Activated CD4-positive, alpha-beta T cell treated with anti-CD3 and anti-CD28 coated beads, Interleukin-2, amount 10 ng/mL, durations not matched to agents 24 days and 14 days (primary cell): ENCODE measurements at regions of chr7 and their contacts with region 1.

Region 1: GRCh38 chr7:99928994-99929729 is at the start of gene GJC3:
- DNase-seq: peak; percentile 85
- H3K4me3 Mint-ChIP-seq: peak within 1 kb of the TSS; percentile 76
- H3K27ac Mint-ChIP-seq: peak within 1 kb of the TSS; percentile 16
- H3K4me1 Mint-ChIP-seq: peaks cover 18% of the 10 kb centered on the region
- H3K27me3 Mint-ChIP-seq: peaks cover 34% of the 10 kb centered on the region
- total RNA-seq, gene GJC3: 0.36 TPM in 1 of 2 replicates, not detected in the other

Region 2: GRCh38 chr7:99693427-99694200 is 235.5 kb before region 1 on chr7:
- intact Hi-C with region 1: no loop called
- DNase-seq: no peak
- H3K4me3 Mint-ChIP-seq: no peak overlapping the region
- H3K27ac Mint-ChIP-seq: no peak overlapping the region
- H3K4me1 Mint-ChIP-seq: no peaks in the 10 kb centered on the region
- H3K27me3 Mint-ChIP-seq: peaks cover 4% of the 10 kb centered on the region

Region 3: DNA sequence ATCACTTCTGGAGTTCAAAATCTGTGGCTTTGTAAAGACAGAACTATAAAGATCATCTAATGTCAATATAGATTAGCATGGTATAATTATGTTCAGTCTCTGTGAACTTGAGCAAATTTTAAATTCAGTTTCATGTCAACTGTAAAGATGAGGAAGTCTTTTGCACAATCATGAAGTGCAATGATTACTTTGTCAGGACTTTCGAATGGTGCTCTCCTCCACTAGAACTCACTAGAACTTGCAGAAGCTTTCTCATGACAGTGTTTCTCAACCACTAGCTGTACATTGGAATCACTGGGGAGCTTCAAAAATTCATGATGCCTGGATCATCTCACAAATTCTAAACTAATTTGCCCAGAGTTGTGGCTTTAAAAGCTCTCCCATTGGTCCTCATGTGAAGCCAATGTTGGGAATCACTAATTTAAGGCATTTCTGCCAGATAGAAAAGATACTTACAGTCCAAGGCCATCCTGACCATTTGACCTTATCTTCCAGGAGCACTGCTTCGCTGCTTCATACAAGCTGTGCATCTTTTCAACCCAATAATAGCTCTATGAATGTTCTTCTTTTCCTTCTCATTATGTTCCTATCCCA is 65.2 kb before region 1 on chr7:
- intact Hi-C with region 1: no loop called
- DNase-seq: no peak
- H3K4me3 Mint-ChIP-seq: no peak overlapping the region
- H3K27ac Mint-ChIP-seq: no peak overlapping the region
- H3K4me1 Mint-ChIP-seq: no peaks in the 10 kb centered on the region
- H3K27me3 Mint-ChIP-seq: peaks cover 21% of the 10 kb centered on the region

Region 4: DNA sequence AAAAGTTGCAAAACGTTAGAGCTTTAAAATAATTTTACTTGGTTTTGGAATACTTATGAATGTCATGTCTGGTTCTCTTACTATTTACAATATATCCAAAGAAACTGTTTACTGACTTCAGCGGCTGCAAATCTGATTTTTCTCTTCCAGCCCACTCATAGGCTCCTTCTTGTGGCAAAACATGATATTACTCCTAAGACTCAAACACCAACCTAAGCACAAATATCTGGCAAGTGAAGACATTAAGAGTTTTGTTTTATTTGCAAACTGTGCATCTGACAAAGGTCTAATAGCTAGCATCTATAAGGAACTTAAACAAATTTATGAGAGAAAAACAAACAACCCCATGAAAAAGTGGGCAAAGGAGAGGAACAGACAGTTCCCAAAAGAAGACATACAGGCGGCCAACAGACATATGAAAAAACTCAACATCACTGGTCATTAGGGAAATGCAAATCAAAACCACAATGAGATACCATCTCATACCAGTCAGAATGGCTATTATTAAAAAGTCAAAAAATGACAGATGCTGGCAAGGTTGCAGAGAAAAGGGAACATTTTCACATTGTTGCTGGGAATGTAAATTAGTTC is 20.6 kb after region 1 on chr7:
- intact Hi-C with region 1: loop called (anchors 1 kb)
- DNase-seq: no peak
- H3K4me3 Mint-ChIP-seq: no peak overlapping the region
- H3K27ac Mint-ChIP-seq: no peak overlapping the region
- H3K4me1 Mint-ChIP-seq: no peaks in the 10 kb centered on the region
- H3K27me3 Mint-ChIP-seq: peaks cover 9% of the 10 kb centered on the region

Region 5: GRCh38 chr7:101436857-101437576 is 1507.9 kb after region 1 on chr7:
- intact Hi-C with region 1: no loop called
- DNase-seq: no peak
- H3K4me3 Mint-ChIP-seq: no peak overlapping the region
- H3K27ac Mint-ChIP-seq: no peak overlapping the region
- H3K4me1 Mint-ChIP-seq: no peaks in the 10 kb centered on the region
- H3K27me3 Mint-ChIP-seq: peaks cover 10% of the 10 kb centered on the region